GM12878 (cell line): ENCODE measurements at regions of chr1 and their contacts with region 1.

Region 1: DNA sequence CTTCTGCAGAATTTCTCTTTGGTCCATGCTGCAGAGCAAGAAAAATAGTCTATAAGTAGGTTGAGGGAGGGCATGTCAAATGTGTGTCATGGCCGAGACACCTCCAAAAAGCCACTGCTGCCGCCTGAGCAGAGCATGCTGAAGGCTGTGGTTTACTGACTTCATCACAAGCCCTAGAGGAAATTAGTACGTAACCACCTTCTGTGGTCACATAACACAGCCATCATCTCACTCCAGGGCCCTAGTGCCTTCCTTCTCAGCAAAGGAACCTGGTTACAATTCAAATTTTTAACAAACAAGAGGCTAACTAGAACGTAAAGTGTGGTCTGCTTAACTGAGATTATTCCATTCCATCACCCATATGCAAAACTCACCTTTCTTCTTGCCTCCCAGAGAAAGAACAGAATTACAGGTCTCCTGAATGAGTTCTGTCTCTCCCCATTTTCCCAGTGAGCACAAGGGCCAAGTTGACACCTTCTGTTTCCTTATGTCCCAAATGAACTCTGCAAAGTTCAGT is at the start of gene PTPN22:
- DNase-seq: peak; percentile 90
- ATAC-seq: peak; percentile 87
- H3K4me3 ChIP-seq: peak within 1 kb of the TSS; percentile 89
- H3K27ac ChIP-seq: peak within 1 kb of the TSS; percentile 79
- H3K4me1 ChIP-seq: peaks cover 47% of the 10 kb centered on the region
- H3K27me3 ChIP-seq: no peaks in the 10 kb centered on the region
- CTCF ChIP-seq: no peak
- EP300 ChIP-seq: peak in 1 of 2 experiments; percentile 86; a peak in 3 of 4 replicates
- POLR2A ChIP-seq: peak; percentile 90
- RAD21 ChIP-seq: no peak
- polyA plus RNA-seq, gene PTPN22: 30.3 to 32.3 TPM

Region 2: DNA sequence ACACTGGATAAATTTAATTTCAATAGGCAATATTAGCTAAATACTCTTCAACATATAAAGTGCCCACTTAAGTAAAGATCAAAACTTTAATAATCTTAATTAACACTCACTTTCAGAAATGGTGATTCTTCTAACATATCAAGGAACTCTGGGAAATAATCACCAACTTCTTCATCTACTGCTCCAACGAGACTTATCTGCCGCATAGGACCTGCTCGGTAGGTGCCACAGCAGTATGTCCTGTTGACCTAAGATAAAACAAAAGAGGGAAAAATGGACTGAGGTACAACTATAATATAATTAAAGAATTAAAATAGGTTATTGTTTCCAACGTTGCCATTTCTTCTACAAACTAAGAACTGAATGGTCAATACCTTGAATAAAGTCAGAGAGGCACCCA is 94.1 kb before region 1 on chr1:
- CTCF ChIA-PET with region 1: no interaction called
- POLR2A ChIA-PET with region 1: no interaction called
- RAD21 ChIA-PET with region 1: no interaction called
- SMC1A ChIA-PET with region 1: no interaction called
- in situ Hi-C with region 1: no loop called
- intact Hi-C with region 1: no loop called
- DNase-seq: no peak
- ATAC-seq: no peak
- H3K4me3 ChIP-seq: no peak overlapping the region
- H3K27ac ChIP-seq: no peak overlapping the region
- H3K4me1 ChIP-seq: peaks cover 18% of the 10 kb centered on the region
- H3K27me3 ChIP-seq: no peaks in the 10 kb centered on the region
- CTCF ChIP-seq: no peak
- EP300 ChIP-seq: no peak
- POLR2A ChIP-seq: no peak
- RAD21 ChIP-seq: no peak

Region 3: GRCh38 chr1:113881661-113882060 is 10.0 kb after region 1 on chr1:
- CTCF ChIA-PET with region 1: interaction called, 27 read pairs
- POLR2A ChIA-PET with region 1: interaction called, 56 read pairs
- RAD21 ChIA-PET with region 1: interaction called, 30 read pairs
- SMC1A ChIA-PET with region 1: interaction called, 396 read pairs
- in situ Hi-C with region 1: no loop called
- intact Hi-C with region 1: no loop called
- DNase-seq: no peak
- ATAC-seq: no peak
- H3K4me3 ChIP-seq: no peak overlapping the region
- H3K27ac ChIP-seq: peak overlapping the region; percentile 40
- H3K4me1 ChIP-seq: peaks cover 28% of the 10 kb centered on the region
- H3K27me3 ChIP-seq: no peaks in the 10 kb centered on the region
- CTCF ChIP-seq: no peak
- EP300 ChIP-seq: no peak
- POLR2A ChIP-seq: no peak
- RAD21 ChIP-seq: no peak

Region 4: DNA sequence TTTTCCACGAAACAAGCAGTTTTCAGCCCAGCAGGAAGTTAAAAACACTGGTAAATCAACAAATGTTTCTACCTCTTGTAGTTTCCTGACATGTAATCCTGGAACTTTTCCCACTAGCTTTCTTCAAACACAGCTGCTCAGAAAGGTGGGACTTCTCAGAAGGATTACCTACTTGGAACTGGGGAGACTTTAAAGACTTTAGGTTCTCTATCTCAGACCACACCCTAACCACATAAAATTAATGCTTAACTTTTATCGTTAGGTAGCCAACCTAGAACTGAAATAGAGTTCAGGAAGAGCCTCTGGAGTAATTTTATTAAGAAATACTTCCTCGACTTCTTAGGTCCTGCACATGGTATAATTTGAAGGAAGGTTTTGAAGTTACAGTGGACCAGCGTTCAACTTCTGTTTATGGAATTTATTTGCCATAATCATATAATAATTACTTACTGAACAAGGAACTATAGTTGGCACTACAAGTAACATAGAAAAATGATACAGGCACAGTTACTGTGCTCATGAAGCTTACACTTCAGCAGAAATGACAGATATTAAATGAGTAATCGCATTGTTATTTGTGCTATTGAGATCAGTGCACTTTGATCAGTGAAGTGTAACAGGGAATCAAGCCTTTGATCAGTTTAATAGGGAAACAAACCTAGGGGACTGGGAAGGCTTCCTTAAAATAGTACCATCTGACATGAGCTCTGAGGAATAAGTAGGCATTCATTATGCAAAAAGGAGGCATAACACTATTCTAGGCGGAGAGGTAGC is 15.9 kb after region 1 on chr1 and contains the start of gene BCL2L15:
- CTCF ChIA-PET with region 1: interaction called, 4 read pairs
- POLR2A ChIA-PET with region 1: interaction called, 15 read pairs
- RAD21 ChIA-PET with region 1: interaction called, 30 read pairs
- SMC1A ChIA-PET with region 1: interaction called, 396 read pairs
- in situ Hi-C with region 1: no loop called
- intact Hi-C with region 1: no loop called
- DNase-seq: no peak
- ATAC-seq: no peak
- H3K4me3 ChIP-seq: no peak within 1 kb of the TSS
- H3K27ac ChIP-seq: no peak within 1 kb of the TSS
- H3K4me1 ChIP-seq: no peaks in the 10 kb centered on the region
- H3K27me3 ChIP-seq: no peaks in the 10 kb centered on the region
- CTCF ChIP-seq: no peak
- EP300 ChIP-seq: no peak
- POLR2A ChIP-seq: no peak
- RAD21 ChIP-seq: no peak
- polyA plus RNA-seq, gene BCL2L15: 0.42 to 0.56 TPM

Region 5: DNA sequence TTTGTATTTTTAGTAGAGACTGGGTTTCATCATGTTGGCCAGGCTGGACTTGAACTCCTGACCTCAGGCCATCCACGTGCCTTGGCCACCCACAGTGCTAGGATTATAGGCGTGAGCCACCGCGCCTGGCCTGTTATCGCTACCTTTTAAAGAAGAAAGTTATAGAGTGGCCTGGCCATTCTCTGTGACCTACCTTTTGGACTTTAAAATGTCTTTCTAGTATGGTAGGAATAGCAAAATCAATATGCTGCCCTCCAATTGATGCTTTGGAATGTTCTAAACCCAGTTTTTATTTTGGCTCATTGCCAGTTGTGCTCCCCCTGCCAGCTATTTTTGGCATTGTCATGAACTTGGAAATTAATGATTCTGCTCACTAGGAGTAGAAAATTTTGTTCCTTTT is 77.4 kb after region 1 on chr1:
- CTCF ChIA-PET with region 1: interaction called, 5 read pairs
- POLR2A ChIA-PET with region 1: interaction called, 3 read pairs
- RAD21 ChIA-PET with region 1: interaction called, 3 read pairs
- SMC1A ChIA-PET with region 1: interaction called, 10 read pairs
- in situ Hi-C with region 1: no loop called
- intact Hi-C with region 1: no loop called
- DNase-seq: no peak
- ATAC-seq: no peak
- H3K4me3 ChIP-seq: no peak overlapping the region
- H3K27ac ChIP-seq: no peak overlapping the region
- H3K4me1 ChIP-seq: peaks cover 24% of the 10 kb centered on the region
- H3K27me3 ChIP-seq: no peaks in the 10 kb centered on the region
- CTCF ChIP-seq: 0 out of 6 replicates have a peak, but pooled peaks of 1 of the 3 experiments have one; percentile 10
- EP300 ChIP-seq: no peak
- POLR2A ChIP-seq: no peak
- RAD21 ChIP-seq: no peak